Endothelial cell of umbilical vein (primary cell): ENCODE measurements at regions of chr11 and their contacts with region 1.

Region 1: DNA sequence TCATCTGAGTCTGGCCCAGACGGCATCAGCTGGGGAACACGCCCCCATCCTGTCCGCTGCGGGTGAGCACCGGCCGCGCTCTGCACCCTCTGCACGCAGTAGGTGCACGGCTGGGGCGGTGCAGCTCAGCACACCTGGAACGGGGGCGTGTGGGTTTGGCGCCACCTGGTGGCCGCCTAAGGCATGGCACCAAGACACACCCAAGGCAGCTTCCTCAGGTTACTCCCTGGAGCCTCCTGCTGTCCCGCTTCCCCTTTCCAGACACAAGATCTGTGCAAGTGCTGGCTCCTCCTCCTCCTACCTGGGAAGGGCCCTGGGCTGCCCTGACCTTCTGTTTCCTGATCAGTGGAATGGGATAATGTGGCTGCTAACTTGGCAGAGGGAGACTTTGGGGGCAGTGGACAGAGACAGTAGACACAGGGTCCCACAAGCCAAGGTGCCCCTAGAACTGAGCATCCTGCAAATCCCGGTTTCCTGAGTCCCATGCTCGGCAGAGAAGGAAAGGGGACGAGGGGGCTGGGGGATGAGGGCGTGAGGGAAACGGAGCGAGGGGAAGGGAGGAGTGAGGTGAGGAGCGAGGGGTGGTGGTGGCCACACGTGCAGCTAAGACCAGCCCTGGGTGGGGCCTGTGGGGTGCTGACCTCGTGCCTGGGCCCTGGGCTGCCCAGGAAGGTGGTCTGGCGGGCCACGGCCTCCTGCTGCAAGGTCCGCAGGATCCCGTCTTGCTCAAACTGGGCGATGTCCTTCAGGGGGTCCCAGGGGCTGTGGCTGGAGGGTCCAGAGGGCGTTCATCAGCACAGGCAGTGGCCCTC is 34.8 kb upstream of the CARS1 start:
- DNase-seq: peak; percentile 59
- H3K4me3 ChIP-seq: no peak overlapping the region
- H3K27ac ChIP-seq: no peak overlapping the region
- H3K4me1 ChIP-seq: peaks cover 21% of the 10 kb centered on the region
- H3K27me3 ChIP-seq: no peaks in the 10 kb centered on the region
- CTCF ChIP-seq: peak; percentile 98 to 99
- POLR2A ChIP-seq: no peak

Region 2: DNA sequence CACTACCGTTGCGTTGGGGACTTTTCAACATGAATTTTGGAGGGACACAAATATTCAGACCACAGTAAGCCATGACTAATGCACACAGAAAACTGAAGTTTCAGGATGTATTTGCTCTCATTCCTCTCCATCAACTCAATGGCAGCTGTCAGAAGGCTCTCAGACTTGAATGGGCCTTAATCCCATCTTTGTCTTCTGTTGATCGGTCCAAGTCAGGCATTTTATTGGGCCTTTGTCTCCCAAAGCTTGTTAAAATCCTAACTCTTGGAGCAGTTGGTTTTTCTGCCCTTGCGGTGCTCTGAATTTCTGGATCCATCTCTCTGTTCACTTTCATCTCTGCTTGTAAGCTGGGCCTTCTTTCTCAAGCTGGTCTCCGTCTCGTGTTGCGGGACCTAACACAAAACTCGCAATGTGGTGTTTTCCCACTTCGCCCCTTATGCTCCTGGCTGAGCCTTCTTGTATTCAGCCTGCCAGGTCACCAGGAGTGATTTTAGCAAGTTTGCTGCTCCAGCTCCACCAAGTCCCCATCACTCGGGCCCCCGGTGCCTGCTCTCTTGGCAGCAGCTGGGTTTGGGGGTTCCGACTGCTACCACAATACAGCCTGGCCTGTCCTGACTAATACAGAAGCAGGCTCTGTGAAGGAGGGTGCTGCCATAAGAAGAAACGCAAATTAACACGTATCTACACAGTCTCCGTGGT is 763.2 kb before region 1 on chr11:
- CTCF ChIA-PET with region 1: no interaction called
- POLR2A ChIA-PET with region 1: no interaction called
- dilution Hi-C with region 1: no loop called
- intact Hi-C with region 1: no loop called
- DNase-seq: no peak
- H3K4me3 ChIP-seq: no peak overlapping the region
- H3K27ac ChIP-seq: no peak overlapping the region
- H3K4me1 ChIP-seq: no peaks in the 10 kb centered on the region
- H3K27me3 ChIP-seq: no peaks in the 10 kb centered on the region
- CTCF ChIP-seq: no peak
- POLR2A ChIP-seq: no peak

Region 3: DNA sequence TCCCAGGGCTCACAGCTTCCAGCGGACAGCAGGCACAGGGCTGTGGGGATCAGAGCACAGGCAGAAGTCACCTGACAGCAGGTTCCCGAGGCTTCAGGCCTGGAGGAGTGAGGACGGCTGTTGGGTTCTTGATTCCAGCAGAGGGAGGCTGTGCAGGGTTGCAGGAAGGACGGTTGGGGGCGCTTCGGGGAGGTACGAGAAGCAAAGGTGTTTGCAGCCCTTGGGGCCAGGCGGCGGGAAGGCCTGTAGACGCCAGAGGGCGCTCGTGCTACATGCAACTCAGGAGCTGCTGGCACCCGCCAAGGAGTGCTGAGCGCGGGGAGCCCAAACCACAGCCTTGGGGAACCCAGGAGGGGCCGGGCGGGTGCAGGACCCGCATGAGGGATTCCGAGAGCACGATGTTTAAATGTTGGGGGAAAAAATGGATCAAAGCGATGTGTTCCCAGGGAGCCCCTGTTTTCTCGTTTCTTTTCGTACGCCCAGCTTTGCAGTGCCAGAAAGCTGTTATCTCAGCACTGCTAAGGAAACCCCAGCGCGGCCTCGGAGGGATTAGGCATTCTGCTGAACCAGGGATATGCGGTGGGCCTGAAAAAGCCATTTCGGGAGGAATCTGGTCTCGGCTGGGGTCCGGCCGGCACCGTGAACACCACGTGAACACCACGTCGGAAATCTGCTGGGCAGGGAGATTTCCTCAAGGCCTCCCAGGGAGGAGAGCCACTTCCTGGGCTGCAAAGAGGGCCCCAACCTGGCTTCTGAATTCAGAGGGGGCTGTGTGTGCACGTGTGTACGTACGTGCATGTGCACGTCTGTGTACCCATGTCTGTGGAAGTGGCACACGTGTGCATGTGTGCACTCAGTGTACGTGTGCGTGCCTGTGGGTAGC is 559.1 kb before region 1 on chr11:
- CTCF ChIA-PET with region 1: interaction called, 18 read pairs
- POLR2A ChIA-PET with region 1: no interaction called
- dilution Hi-C with region 1: no loop called
- intact Hi-C with region 1: loop called (anchors 10 kb)
- DNase-seq: peak; percentile 87
- H3K4me3 ChIP-seq: no peak overlapping the region
- H3K27ac ChIP-seq: no peak overlapping the region
- H3K4me1 ChIP-seq: peaks cover 9% of the 10 kb centered on the region
- H3K27me3 ChIP-seq: no peaks in the 10 kb centered on the region
- CTCF ChIP-seq: peak; percentile 99
- POLR2A ChIP-seq: no peak

Region 4: GRCh38 chr11:2778630-2779498 is 313.1 kb before region 1 on chr11:
- CTCF ChIA-PET with region 1: no interaction called
- POLR2A ChIA-PET with region 1: no interaction called
- dilution Hi-C with region 1: no loop called
- intact Hi-C with region 1: no loop called
- DNase-seq: peak; percentile 41
- H3K4me3 ChIP-seq: no peak overlapping the region
- H3K27ac ChIP-seq: no peak overlapping the region
- H3K4me1 ChIP-seq: no peaks in the 10 kb centered on the region
- H3K27me3 ChIP-seq: no peaks in the 10 kb centered on the region
- CTCF ChIP-seq: no peak
- POLR2A ChIP-seq: no peak

Region 5: DNA sequence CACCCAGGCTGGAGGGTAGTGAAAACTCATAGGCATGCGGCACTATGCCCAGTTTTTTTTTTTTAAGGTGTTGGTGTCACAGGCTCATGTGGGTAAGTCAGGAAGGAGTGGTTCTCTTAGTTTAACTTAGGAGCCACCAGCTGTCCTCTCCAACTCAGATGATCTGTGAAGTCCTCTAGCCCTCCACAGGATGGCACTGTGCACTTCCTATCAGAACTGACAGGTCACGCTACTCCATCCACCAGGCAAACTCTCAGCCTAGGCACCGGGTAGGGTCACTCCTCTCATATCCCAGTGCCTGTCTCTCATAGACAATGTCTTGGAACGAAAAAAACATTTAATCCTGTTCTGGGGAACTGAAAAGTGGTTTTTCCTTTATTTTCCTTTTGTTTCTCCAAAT is 116.4 kb before region 1 on chr11:
- CTCF ChIA-PET with region 1: interaction called, 15 read pairs
- POLR2A ChIA-PET with region 1: no interaction called
- dilution Hi-C with region 1: no loop called
- intact Hi-C with region 1: no loop called
- DNase-seq: no peak
- H3K4me3 ChIP-seq: no peak overlapping the region
- H3K27ac ChIP-seq: no peak overlapping the region
- H3K4me1 ChIP-seq: no peaks in the 10 kb centered on the region
- H3K27me3 ChIP-seq: no peaks in the 10 kb centered on the region
- CTCF ChIP-seq: peak; percentile 22 to 35
- POLR2A ChIP-seq: no peak

Region 6: DNA sequence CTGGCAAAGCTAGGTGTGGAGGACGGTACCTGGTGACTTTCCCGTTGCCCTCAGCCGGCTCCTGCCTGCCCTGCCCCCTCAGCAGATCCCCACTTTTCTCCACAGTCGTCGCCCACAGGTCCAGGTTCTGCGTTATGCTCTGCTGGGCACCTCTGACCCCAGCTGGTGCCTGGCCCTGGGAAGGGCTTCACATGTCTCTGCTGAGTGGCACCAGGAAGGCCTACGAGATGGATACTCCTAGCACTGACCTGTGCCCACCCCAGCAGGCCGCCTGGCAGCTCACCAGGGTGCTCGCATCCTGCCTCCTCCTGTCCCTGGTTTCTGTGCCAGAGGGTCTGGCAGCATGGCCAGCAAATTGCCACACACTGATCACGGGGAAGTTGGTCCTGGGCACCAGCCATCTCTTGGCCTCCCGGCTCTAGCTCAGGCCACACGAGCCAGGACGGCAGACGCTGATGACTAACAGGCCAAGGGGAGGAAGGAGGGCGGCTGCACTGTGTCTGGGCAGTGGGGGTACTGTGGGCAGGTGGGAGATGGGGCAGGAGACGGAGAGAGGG is 48.6 kb before region 1 on chr11:
- CTCF ChIA-PET with region 1: interaction called, 183 read pairs
- POLR2A ChIA-PET with region 1: no interaction called
- dilution Hi-C with region 1: no loop called
- intact Hi-C with region 1: no loop called
- DNase-seq: no peak
- H3K4me3 ChIP-seq: no peak overlapping the region
- H3K27ac ChIP-seq: peak overlapping the region; percentile 39
- H3K4me1 ChIP-seq: peaks cover 7% of the 10 kb centered on the region
- H3K27me3 ChIP-seq: no peaks in the 10 kb centered on the region
- CTCF ChIP-seq: no peak
- POLR2A ChIP-seq: no peak

Region 7: DNA sequence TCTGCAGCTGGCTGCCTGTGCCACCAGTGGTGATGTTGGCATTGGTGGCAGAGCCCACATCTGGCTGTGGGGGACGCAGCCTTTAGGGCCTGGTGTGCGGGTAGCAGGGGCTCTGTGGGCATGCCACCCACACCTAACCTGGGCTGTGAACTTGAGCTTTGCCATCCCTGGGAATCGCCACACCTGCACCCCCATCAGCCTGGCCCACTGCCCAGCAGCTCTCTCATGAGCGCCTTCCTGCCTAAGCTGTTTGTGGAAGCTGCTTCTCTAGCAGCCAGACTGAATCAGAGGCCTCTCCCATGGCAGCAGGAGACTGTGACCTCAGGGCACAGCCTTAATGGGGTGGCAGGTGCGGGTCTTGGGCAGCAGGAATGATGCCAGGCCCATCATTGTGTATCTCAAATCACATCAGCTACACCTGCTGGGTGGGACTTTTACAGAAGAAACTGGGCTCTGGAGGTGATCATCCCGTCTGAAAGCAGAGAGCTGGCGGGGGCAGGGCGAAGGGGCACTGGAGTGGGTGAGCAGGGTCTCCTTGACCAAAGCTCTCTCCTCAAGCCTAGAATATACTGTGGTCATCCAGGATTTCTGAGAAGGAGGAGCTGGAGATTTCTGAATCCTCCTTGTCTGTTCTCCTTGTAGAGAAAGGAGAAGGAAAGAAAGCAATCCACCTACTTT is 16.9 kb before region 1 on chr11:
- CTCF ChIA-PET with region 1: interaction called, 16 read pairs
- POLR2A ChIA-PET with region 1: no interaction called
- dilution Hi-C with region 1: no loop called
- intact Hi-C with region 1: no loop called
- DNase-seq: peak; percentile 53
- H3K4me3 ChIP-seq: no peak overlapping the region
- H3K27ac ChIP-seq: no peak overlapping the region
- H3K4me1 ChIP-seq: no peaks in the 10 kb centered on the region
- H3K27me3 ChIP-seq: peaks cover 0 to 4% of the 10 kb centered on the region in 2 experiments
- CTCF ChIP-seq: no peak
- POLR2A ChIP-seq: no peak

Region 8: GRCh38 chr11:3109921-3110706 is 18.1 kb after region 1 on chr11:
- CTCF ChIA-PET with region 1: interaction called, 11 read pairs
- POLR2A ChIA-PET with region 1: no interaction called
- dilution Hi-C with region 1: no loop called
- intact Hi-C with region 1: no loop called
- DNase-seq: peak; percentile 28
- H3K4me3 ChIP-seq: no peak overlapping the region
- H3K27ac ChIP-seq: no peak overlapping the region
- H3K4me1 ChIP-seq: no peaks in the 10 kb centered on the region
- H3K27me3 ChIP-seq: no peaks in the 10 kb centered on the region
- CTCF ChIP-seq: peak; percentile 49 to 72
- POLR2A ChIP-seq: no peak

Region 9: GRCh38 chr11:3177931-3178330 is 85.9 kb after region 1 on chr11:
- CTCF ChIA-PET with region 1: no interaction called
- POLR2A ChIA-PET with region 1: no interaction called
- dilution Hi-C with region 1: no loop called
- intact Hi-C with region 1: no loop called
- DNase-seq: no peak
- H3K4me3 ChIP-seq: no peak overlapping the region
- H3K27ac ChIP-seq: no peak overlapping the region
- H3K4me1 ChIP-seq: no peaks in the 10 kb centered on the region
- H3K27me3 ChIP-seq: no peaks in the 10 kb centered on the region
- CTCF ChIP-seq: no peak
- POLR2A ChIP-seq: no peak

Region 10: DNA sequence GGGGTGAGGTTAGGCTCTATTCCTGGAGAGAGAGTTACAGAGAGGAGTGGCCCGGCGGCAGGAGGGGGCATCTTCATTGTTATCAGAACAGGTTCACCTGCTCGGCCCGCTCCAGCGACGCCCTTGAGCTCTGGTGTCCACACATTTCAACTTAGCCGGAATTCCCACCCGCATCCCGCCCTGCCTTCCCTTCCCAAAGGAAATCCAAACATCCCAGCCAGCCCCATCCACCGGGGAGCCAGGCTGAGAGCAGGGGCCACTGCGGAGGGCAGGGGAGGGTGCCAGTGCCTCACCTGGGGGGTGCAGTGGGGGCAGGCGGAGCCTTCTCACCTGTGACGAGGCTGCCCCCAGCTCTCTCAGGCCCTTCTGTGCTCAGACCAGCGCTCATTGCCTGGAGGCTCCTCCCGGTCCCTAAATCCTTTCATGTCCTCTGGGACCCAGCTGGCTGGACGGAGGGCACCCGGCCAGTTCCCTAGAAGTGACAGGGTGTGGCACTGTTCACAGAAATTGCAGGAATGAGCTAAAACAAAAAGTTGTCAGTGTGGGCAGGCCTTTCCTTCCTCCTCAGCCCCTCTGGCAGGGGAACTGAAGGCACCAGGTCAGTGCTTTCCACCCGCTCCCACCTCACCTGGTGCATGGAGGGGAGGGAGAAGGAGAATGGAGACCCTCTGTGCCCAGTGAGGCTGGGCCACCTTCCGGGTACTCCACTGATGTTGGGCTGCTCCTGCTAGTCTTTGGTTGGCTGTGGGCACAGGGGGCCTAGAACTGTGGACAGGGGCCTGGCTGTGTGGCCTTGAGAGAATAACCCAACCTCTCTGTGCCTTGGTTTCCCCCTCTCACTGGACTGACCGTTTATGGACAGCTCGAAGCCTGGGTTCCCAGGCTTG is 128.8 kb after region 1 on chr11:
- CTCF ChIA-PET with region 1: interaction called, 18 read pairs
- POLR2A ChIA-PET with region 1: no interaction called
- dilution Hi-C with region 1: no loop called
- intact Hi-C with region 1: loop called (anchors 1 kb)
- DNase-seq: no peak
- H3K4me3 ChIP-seq: no peak overlapping the region
- H3K27ac ChIP-seq: no peak overlapping the region
- H3K4me1 ChIP-seq: no peaks in the 10 kb centered on the region
- H3K27me3 ChIP-seq: no peaks in the 10 kb centered on the region
- CTCF ChIP-seq: no peak
- POLR2A ChIP-seq: no peak